ENCODE measurements at regions of chr20 and their contacts with region 1.

Region 1: GRCh38 chr20:48921151-48921898 is at the start of gene ARFGEF2:
- DNase-seq: peak; percentile 77
- ATAC-seq: peak; percentile 88
- H3K4me3 ChIP-seq: peak within 1 kb of the TSS; percentile 87
- H3K27ac ChIP-seq: peak within 1 kb of the TSS; percentile 91
- H3K4me1 ChIP-seq: peaks cover 16% of the 10 kb centered on the region
- H3K27me3 ChIP-seq: no peaks in the 10 kb centered on the region
- CTCF ChIP-seq: 0 out of 6 replicates have a peak, but pooled peaks of 1 of the 3 experiments have one; percentile 9
- EP300 ChIP-seq: peak; percentile 42 to 60; a peak in 3 of 4 replicates
- POLR2A ChIP-seq: peak; percentile 97
- RAD21 ChIP-seq: no peak
- polyA plus RNA-seq, gene ARFGEF2: 5.2 to 5.8 TPM

Region 2: DNA sequence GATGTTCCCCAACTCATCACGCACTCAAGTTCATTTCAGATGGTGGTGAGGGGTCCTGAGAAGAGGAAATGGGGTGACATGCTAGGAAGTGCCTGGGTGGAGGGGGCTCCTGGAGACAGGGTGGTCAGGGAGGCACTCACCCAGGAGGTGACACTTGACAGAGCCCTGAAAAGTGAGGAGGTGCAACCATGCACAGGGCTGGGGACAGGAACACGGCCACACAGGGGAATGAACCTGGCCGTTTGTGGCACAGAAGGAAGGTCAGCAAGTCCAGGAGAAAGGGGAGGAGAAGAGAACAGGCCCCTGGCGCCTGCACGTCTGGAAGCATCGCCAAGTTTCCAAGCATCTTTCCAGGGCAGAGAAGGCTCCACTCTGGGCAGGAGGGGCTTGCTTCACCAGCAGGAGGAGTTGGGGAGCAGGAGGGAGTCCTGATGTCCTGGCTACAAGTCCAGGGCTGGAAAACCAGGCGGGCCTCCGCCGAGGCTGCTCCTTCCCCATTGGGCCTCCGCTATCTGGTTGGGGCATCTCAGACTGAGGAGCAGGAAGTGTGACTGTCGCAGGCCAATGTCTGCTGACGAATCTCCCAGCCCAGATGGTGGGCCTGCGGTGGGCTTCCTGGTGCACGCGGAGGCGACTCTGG is 515.5 kb before region 1 on chr20:
- CTCF ChIA-PET with region 1: no interaction called
- POLR2A ChIA-PET with region 1: no interaction called
- RAD21 ChIA-PET with region 1: no interaction called
- SMC1A ChIA-PET with region 1: no interaction called
- in situ Hi-C with region 1: no loop called
- intact Hi-C with region 1: no loop called
- DNase-seq: no peak
- ATAC-seq: no peak
- H3K4me3 ChIP-seq: no peak overlapping the region
- H3K27ac ChIP-seq: no peak overlapping the region
- H3K4me1 ChIP-seq: no peaks in the 10 kb centered on the region; the same call in 1 of the 2 replicates
- H3K27me3 ChIP-seq: peaks cover 0 to 4% of the 10 kb centered on the region in 2 experiments; a peak in 3 of 4 replicates
- CTCF ChIP-seq: no peak
- EP300 ChIP-seq: no peak
- POLR2A ChIP-seq: no peak
- RAD21 ChIP-seq: no peak

Region 3: DNA sequence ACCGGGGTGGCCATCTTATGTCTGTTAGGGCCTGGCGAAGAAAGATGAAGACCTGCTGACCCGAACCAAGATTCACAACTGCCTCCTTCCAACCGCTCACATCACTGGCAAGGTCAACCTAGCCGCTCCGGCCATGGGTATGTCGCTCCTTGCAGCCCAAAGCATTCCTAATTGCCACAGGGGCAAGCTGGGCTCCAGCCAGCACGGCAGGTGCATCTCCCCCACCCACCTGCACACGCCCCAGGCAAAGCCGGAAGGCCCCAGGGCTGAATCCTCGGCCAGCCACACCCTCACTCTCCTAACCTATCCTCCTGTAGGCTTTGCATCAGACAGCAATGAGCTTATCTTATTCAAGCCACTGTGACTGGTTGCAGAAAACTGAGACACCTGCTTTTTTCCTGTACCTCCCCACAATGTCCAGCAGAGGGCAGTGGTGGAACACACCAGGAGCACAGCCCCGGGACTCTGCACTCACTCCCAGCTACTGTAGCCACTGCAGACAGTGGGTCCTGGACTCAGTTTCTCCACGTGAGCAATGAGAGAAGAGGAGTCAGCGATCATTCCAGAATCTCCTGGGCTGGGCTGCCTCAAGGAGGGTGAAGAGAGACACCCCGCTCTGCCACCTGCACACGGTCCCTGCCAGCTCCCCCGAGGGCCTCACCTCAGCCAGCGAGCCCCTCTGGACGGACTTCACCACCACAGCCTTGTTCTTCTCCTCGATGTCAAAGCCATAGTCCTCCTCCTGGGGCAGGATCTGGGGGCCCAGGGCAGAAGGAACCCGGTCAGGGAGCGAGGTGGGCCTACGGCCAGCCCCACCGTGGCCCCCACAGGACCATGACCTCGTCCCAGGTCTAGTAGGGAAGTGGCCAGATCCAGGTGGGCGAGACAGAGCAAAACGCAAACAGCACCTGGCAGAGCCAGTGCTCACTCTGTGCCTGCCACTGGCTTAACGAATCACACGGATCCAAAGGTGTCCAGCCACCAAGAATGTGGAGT is 263.6 kb before region 1 on chr20:
- CTCF ChIA-PET with region 1: interaction called, 10 read pairs
- POLR2A ChIA-PET with region 1: no interaction called
- RAD21 ChIA-PET with region 1: no interaction called
- SMC1A ChIA-PET with region 1: interaction called, 8 read pairs
- in situ Hi-C with region 1: no loop called
- intact Hi-C with region 1: no loop called
- DNase-seq: peak; percentile 21
- ATAC-seq: peak; percentile 94
- H3K4me3 ChIP-seq: no peak overlapping the region
- H3K27ac ChIP-seq: no peak overlapping the region
- H3K4me1 ChIP-seq: no peaks in the 10 kb centered on the region
- H3K27me3 ChIP-seq: no peaks in the 10 kb centered on the region
- CTCF ChIP-seq: peak; percentile 91 to 96 (median 93)
- EP300 ChIP-seq: no peak
- POLR2A ChIP-seq: no peak
- RAD21 ChIP-seq: peak; percentile 95

Region 4: GRCh38 chr20:48846498-48847485 is 74.5 kb before region 1 on chr20:
- CTCF ChIA-PET with region 1: no interaction called
- POLR2A ChIA-PET with region 1: no interaction called
- RAD21 ChIA-PET with region 1: no interaction called
- SMC1A ChIA-PET with region 1: interaction called, 5 read pairs
- in situ Hi-C with region 1: no loop called
- intact Hi-C with region 1: loop called (anchors 5 kb)
- DNase-seq: peak; percentile 93
- ATAC-seq: peak; percentile 97
- H3K4me3 ChIP-seq: no peak overlapping the region; the same call in 1 of the 2 replicates
- H3K27ac ChIP-seq: peak overlapping the region; percentile 91
- H3K4me1 ChIP-seq: peaks cover 36% of the 10 kb centered on the region
- H3K27me3 ChIP-seq: no peaks in the 10 kb centered on the region
- CTCF ChIP-seq: no peak
- EP300 ChIP-seq: peak; percentile 92 to 97
- POLR2A ChIP-seq: peak; percentile 49; the same call in 1 of the 2 replicates
- RAD21 ChIP-seq: no peak

Region 5: GRCh38 chr20:49009899-49010631 is 88.7 kb after region 1 on chr20:
- CTCF ChIA-PET with region 1: no interaction called
- POLR2A ChIA-PET with region 1: interaction called, 11 read pairs
- RAD21 ChIA-PET with region 1: no interaction called
- SMC1A ChIA-PET with region 1: no interaction called
- in situ Hi-C with region 1: no loop called
- intact Hi-C with region 1: no loop called
- DNase-seq: no peak
- ATAC-seq: no peak
- H3K4me3 ChIP-seq: no peak overlapping the region
- H3K27ac ChIP-seq: no peak overlapping the region
- H3K4me1 ChIP-seq: no peaks in the 10 kb centered on the region
- H3K27me3 ChIP-seq: no peaks in the 10 kb centered on the region
- CTCF ChIP-seq: no peak
- EP300 ChIP-seq: no peak
- POLR2A ChIP-seq: no peak
- RAD21 ChIP-seq: no peak